GM12878 (cell line): ENCODE measurements at regions of chr2 and their contacts with region 1.

Region 1: DNA sequence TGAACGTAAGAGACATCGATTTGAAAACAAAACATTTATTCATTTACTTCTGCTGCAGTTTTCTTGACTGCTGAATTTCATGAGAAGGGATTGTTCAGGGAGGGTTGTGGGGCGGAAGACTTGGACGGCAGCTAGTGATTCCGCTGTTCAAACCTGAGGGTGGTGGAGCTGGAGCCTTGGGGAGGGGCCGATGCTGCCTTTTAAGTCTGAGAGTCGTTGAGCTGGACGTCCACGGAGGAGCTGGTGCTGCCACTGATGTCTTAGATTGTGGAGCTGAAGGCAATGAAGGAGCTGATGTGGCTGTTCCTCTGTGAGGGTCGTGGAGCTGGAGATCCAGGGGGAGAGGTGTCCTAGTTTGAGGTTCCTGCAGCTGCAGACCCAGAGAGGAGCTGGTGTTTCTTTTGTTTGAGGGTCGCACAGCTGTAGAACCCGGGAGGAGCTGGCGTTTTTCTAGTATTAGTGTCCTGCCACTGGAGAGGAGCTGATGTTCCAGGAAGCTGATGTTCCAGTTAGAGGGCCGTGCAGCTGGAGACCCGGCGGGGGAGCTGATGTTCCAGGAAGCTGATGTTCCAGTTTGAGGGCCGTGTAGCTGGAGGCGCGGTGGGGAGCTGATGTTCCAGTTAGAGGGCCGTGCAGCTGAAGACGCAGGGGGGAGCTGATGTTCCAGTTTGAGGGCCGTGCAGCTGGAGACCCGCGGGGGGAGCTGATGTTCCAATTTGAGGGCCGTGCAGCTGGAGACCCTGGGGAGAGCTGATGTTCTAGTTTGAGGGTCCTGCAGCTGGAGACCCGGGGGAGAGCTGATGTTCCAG is 150.9 kb downstream of the RTP5 start:
- DNase-seq: no peak
- ATAC-seq: no peak
- H3K4me3 ChIP-seq: no peak overlapping the region
- H3K27ac ChIP-seq: no peak overlapping the region
- H3K4me1 ChIP-seq: no peaks in the 10 kb centered on the region
- H3K27me3 ChIP-seq: no peaks in the 10 kb centered on the region; a peak in 3 of 4 replicates
- CTCF ChIP-seq: peak in 2 of 3 experiments; percentile 26 to 30; a peak in 3 of 6 replicates
- EP300 ChIP-seq: no peak
- POLR2A ChIP-seq: no peak
- RAD21 ChIP-seq: peak; percentile 29; the same call in 1 of the 2 replicates

Region 2: GRCh38 chr2:241901500-241902351 is 118.7 kb before region 1 on chr2:
- CTCF ChIA-PET with region 1: no interaction called
- POLR2A ChIA-PET with region 1: no interaction called
- RAD21 ChIA-PET with region 1: no interaction called
- SMC1A ChIA-PET with region 1: no interaction called
- in situ Hi-C with region 1: no loop called
- intact Hi-C with region 1: no loop called
- DNase-seq: no peak
- ATAC-seq: no peak
- H3K4me3 ChIP-seq: no peak overlapping the region
- H3K27ac ChIP-seq: no peak overlapping the region
- H3K4me1 ChIP-seq: no peaks in the 10 kb centered on the region
- H3K27me3 ChIP-seq: no peaks in the 10 kb centered on the region
- CTCF ChIP-seq: no peak
- EP300 ChIP-seq: no peak
- POLR2A ChIP-seq: no peak
- RAD21 ChIP-seq: no peak

Region 3: DNA sequence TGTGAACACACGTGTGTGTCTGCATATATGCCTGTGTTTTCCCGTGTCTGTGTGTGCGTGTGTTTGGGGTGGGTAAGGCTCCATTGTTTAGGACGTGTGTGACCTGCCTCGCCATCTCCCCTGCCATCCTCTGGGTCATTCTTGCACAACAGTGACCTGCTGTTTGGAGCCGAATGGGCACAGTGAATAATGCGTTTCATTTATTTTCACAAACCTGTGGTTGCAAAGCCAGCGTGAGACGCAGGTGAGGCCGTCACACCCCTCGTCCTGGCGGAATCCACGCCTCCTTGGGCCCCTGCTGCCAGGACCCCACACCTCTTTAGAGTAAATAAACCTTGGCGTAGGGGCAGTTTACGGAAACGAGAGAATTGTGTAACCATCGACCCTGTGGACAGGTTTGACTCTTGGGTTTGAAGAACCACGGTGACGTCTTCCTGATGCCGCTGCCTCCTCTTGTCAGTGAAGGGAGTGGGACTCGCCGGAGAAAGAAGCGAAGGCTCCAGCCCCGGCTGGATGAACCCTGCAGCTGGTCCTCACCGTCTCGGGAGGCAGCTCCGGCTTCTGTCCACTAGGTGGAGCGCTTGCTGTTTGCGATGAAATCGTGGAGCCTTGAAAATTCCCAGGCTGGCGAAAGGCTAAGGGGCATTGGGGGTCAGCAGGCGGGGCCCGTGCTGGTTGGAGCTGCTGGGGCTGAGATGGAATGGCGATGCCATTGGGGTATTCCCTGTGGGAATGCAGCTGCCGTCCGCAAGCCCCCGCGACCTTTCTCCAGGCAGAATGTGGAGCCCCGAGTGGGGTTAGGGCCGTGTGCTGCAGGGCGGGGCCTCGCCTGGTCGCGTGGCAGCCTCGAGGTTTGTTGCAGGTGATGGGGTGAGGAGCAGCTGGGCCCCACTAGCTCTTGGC is 69.7 kb before region 1 on chr2:
- CTCF ChIA-PET with region 1: interaction called, 14 read pairs
- POLR2A ChIA-PET with region 1: no interaction called
- RAD21 ChIA-PET with region 1: interaction called, 9 read pairs
- SMC1A ChIA-PET with region 1: interaction called, 7 read pairs
- in situ Hi-C with region 1: no loop called
- intact Hi-C with region 1: no loop called
- DNase-seq: no peak
- ATAC-seq: peak; percentile 91
- H3K4me3 ChIP-seq: no peak overlapping the region
- H3K27ac ChIP-seq: no peak overlapping the region
- H3K4me1 ChIP-seq: no peaks in the 10 kb centered on the region
- H3K27me3 ChIP-seq: no peaks in the 10 kb centered on the region
- CTCF ChIP-seq: peak; percentile 87 to 92 (median 89)
- EP300 ChIP-seq: no peak
- POLR2A ChIP-seq: no peak
- RAD21 ChIP-seq: peak; percentile 95